ENCODE measurements at regions of chr5 and their contacts with region 1.

Region 1: DNA sequence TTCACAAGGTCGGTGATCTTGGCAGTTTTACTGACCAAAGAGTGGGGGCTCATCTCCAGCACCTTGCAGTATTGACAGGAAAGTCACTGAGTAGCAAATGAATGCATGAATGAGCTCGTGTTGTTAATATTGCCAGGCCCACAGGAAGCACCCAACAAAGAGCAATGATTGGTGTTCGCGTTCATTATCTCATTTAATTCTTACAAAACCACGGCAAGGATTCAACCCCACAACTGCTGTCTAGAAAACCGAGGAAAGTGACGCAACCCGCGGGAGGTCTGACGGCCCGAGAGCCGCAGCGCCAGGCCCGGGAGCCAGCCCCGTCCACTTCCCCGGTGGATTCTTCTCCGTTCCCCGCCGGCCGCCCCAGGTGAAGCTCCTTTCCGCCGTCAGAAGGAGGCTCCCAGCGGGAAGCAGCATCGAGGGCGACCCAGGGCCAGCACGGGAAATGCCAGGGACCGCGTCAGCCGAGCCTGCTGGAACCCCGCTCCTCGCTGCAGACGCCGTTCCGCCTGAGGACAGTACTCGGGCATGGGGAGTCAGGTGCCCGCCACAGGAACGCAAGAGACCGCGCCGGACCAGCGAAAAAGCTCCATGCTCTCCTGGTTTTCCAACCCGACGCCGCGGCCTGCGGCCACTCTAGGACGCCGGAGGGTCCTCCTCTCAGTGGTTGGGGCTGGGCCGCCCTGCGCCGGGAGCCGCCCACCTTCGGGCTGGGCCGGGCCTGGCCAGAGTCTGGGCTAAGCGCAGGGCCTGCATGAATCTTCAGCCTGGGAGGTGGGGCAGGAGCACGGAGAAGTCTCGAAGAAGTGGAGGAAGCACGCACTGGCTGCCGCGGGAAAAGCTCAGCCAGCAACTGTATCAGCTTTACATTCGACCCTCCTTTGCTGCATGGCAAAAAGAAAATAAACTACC is 19.8 kb upstream of the FER start:
- DNase-seq: peak; percentile 71 to 94
- H3K4me3 ChIP-seq: peak overlapping the region; percentile 81 to 98
- H3K27ac ChIP-seq: peak overlapping the region; percentile 87 to 95
- H3K4me1 ChIP-seq: peaks cover 0 to 8% of the 10 kb centered on the region in 2 donors
- H3K27me3 ChIP-seq: no peaks in the 10 kb centered on the region
- CTCF ChIP-seq: no peak

Region 2: GRCh38 chr5:108381954-108382783 is 345.7 kb before region 1 on chr5 and contains the start of gene FBXL17:
- intact Hi-C with region 1: loop called (anchors 5 kb)
- DNase-seq: peak; percentile 74 to 97
- H3K4me3 ChIP-seq: peak within 1 kb of the TSS; percentile 98 to 99
- H3K27ac ChIP-seq: peak within 1 kb of the TSS; percentile 100
- H3K4me1 ChIP-seq: peaks cover 4 to 14% of the 10 kb centered on the region in 2 donors
- H3K27me3 ChIP-seq: no peaks in the 10 kb centered on the region
- CTCF ChIP-seq: no peak
- total RNA-seq, gene FBXL17: 13.6 TPM

Region 3: GRCh38 chr5:108625654-108626053 is 102.3 kb before region 1 on chr5:
- intact Hi-C with region 1: no loop called
- DNase-seq: no peak
- H3K4me3 ChIP-seq: no peak overlapping the region
- H3K27ac ChIP-seq: no peak overlapping the region
- H3K4me1 ChIP-seq: no peaks in the 10 kb centered on the region
- H3K27me3 ChIP-seq: no peaks in the 10 kb centered on the region
- CTCF ChIP-seq: no peak

Region 4: DNA sequence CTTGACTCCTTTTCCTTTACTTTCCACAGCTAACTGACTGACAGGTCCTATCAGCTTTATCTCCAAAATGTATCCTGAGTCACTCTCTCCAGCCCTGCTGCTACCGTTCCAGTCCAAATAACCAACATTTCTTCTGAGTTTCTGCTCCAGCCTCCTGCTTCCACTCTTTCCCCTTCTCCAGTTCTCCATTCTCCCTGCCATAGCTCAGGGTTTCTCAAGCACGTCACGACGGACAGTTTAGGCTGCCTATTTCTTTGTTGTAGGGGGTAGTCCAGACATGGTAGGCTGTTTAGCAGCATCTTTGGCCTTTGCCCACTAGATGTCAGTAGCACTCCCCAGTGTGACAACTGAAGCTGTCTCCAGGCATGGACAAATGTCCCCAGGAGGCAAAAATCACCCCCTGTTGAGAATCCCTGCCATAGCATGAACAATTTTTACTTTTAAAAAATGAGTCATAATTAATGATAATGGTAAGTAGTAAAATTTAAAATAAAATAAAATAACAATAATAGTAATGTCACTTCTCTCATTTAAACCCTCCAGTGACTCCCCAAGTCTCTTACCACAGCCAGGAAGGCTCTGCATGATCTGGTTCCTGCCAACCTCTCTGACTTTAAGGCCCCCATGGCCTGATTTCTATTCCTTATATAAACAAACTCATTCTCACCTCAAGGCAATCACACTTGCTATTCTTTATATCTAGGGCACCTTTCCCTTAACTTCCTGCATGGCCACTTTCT is 85.6 kb before region 1 on chr5:
- intact Hi-C with region 1: loop called (anchors 5 kb)
- DNase-seq: peak in 1 of 2 donors; percentile 69
- H3K4me3 ChIP-seq: no peak overlapping the region
- H3K27ac ChIP-seq: no peak overlapping the region
- H3K4me1 ChIP-seq: peaks cover 0 to 5% of the 10 kb centered on the region in 2 donors
- H3K27me3 ChIP-seq: no peaks in the 10 kb centered on the region
- CTCF ChIP-seq: peak; percentile 25 to 74 (median 71)

Region 5: GRCh38 chr5:108681079-108681921 is 46.6 kb before region 1 on chr5:
- intact Hi-C with region 1: loop called (anchors 5 kb)
- DNase-seq: no peak
- H3K4me3 ChIP-seq: peak overlapping the region in 1 of 2 donors; percentile 27
- H3K27ac ChIP-seq: peak overlapping the region; percentile 55 to 67
- H3K4me1 ChIP-seq: no peaks in the 10 kb centered on the region
- H3K27me3 ChIP-seq: no peaks in the 10 kb centered on the region
- CTCF ChIP-seq: peak; percentile 72 to 86 (median 83)

Region 6: DNA sequence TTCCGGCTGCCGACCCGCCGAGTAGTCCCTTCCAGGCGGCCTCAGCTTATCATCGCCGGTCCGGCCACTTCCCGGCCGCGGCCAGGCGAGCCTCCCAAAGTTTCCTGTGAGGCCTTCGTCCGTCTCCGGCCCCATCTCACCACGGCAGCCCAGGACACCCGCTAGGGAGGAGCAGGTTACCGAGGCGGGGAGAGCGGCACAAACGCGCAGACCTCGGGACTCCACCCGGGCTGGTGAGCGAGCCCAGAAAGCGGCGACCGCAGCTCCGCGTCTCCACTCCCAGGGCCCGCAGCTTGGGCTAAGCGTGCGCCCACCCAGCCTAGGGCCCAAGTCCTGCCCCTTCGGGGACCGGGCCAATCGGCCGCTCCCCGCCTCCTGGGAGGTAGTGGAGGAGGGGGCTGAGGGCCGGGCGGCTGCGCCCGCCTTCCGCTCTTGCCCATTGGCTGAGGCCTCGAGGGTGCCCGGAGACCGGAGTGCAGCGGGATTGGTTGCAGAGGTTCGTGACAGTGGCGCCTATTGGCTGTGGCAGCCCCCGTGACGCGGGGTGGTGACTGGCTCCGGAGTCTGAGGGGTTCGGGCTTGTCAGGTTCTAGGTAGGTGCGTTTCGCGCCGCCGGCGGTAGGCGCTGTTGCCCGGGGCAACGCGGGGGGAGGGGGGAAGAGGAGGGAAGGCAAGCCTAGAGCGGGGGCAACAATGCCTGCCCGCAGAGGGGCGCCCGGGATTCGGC is 20.7 kb after region 1 on chr5:
- intact Hi-C with region 1: loop called (anchors 1 kb)
- DNase-seq: peak; percentile 99 to 100
- H3K4me3 ChIP-seq: peak overlapping the region; percentile 85 to 86
- H3K27ac ChIP-seq: peak overlapping the region; percentile 99
- H3K4me1 ChIP-seq: peaks cover 0 to 5% of the 10 kb centered on the region in 2 donors
- H3K27me3 ChIP-seq: no peaks in the 10 kb centered on the region
- CTCF ChIP-seq: peak in 1 of 3 experiments; percentile 27

Measured in ascending aorta (tissue), 2 donors.